CD8-positive, alpha-beta T cell (primary cell): ENCODE measurements at regions of chr15 and their contacts with region 1.

Region 1: DNA sequence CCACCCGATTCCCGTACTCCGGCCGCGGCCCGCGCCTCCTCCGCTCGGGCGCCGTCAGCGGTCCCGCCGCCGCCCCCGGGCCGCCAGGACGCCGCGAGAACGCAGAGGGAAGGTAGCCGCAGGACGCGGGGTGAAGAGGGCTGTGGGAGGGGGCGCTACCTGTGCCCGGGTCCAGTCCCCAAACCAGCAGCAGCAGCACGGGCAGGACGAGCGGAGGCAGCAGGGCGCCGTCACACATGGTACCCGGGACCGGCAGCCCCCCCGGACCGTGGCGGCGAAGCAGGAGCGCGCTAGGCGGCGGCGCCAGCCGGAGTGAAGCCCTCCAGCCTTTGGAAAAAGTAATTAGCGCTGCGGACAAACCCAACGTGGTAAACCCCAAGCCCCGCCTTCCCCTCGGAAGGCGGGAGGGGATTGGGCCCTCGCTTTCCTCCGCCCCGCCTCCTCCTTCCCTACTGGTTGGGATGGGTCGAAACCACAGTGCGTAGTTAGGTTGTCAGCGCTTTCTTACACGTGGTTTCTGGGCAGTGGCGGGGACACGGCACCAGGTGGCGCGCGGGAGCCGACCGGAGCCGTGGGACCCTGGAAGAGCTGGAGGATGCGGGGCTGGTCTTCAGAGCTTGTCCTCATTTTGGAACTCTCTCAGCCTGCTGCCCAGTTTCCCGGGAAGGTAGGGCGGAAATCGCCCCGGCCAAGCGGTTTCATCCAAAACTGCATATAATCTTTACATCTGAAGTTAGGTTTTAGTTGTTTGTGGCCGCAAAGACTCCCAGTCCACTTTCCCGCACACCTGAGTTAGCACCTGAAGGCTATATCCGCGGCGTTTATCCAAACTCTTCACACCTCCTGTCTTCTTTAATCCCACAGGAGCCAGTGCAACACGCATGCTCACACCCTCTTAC is at the start of gene ADAMTS17:
- DNase-seq: peak; percentile 90 to 98 (median 95)
- ATAC-seq: peak; percentile 94
- H3K4me3 ChIP-seq: peak within 1 kb of the TSS; percentile 54 to 80
- H3K4me3 Mint-ChIP-seq: peak within 1 kb of the TSS; percentile 80
- H3K27ac ChIP-seq: peak within 1 kb of the TSS in 1 of 2 experiments; percentile 47
- H3K27ac Mint-ChIP-seq: peak within 1 kb of the TSS; percentile 22
- H3K4me1 ChIP-seq: peaks cover 12% of the 10 kb centered on the region
- H3K4me1 Mint-ChIP-seq: peaks cover 23% of the 10 kb centered on the region
- H3K27me3 ChIP-seq: no peaks in the 10 kb centered on the region
- H3K27me3 Mint-ChIP-seq: no peaks in the 10 kb centered on the region
- CTCF ChIP-seq: peak; percentile 94
- total RNA-seq, gene ADAMTS17: 15.3 to 18.0 TPM

Region 2: DNA sequence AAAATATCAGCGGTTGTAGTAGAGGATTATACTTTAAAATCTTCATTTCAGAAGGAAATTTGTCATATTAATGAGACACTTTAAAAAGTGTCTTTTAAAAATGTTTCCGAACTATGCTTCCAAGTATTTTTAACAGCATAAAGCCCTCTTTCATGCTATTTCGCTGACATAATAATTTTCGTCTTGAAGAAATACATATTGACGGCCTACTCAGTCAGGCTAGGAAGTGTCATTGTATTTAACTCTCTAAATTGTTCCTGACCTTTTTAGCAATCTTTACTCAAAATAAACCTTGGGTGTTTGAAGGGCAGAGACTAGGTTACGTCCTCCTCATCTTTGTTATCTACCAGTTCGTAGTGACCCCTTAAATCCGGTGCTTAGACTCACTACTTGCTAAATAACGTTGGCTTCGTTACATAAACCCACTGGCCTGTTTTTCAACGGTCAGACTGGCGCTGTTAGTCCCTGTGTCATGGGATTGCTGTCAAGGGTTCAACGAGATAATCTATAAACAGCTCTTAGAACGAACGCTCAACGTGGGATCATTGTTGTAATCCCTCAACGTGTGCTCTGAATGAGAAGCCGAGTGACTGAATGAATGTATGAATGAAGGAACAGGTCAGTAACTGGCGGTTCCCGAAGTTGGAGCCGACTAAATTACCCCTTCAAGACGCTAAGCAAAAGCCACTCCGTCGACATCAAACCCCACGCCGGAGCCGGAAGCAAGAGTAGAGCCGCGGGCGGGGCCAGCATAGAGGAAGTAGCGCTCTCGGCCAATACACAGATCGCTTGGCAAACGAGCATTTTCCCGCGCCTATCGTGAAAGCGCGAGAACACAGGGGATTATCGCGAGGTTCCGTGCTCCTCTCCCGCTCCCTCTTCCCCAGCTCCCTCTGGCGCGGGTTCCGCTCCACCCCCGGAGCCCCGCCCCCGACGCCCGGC is 1091.1 kb before region 1 on chr15:
- CTCF ChIA-PET with region 1: no interaction called
- POLR2A ChIA-PET with region 1: no interaction called
- intact Hi-C with region 1: loop called in 1 of 2 experiments (anchors 2 kb)
- DNase-seq: peak; percentile 83 to 98 (median 92)
- ATAC-seq: peak; percentile 95
- H3K4me3 ChIP-seq: peak overlapping the region; percentile 55 to 59
- H3K4me3 Mint-ChIP-seq: peak overlapping the region; percentile 90
- H3K27ac ChIP-seq: peak overlapping the region; percentile 25 to 79
- H3K27ac Mint-ChIP-seq: peak overlapping the region; percentile 89
- H3K4me1 ChIP-seq: peaks cover 19% of the 10 kb centered on the region
- H3K4me1 Mint-ChIP-seq: peaks cover 29% of the 10 kb centered on the region
- H3K27me3 ChIP-seq: no peaks in the 10 kb centered on the region
- H3K27me3 Mint-ChIP-seq: no peaks in the 10 kb centered on the region
- CTCF ChIP-seq: no peak

Region 3: GRCh38 chr15:99733268-99734039 is 608.5 kb before region 1 on chr15 and contains the start of gene LYSMD4:
- CTCF ChIA-PET with region 1: no interaction called
- POLR2A ChIA-PET with region 1: no interaction called
- intact Hi-C with region 1: loop called (anchors 1 to 5 kb)
- DNase-seq: peak; percentile 97 to 99 (median 98)
- ATAC-seq: peak; percentile 99
- H3K4me3 ChIP-seq: peak within 1 kb of the TSS; percentile 69 to 80
- H3K4me3 Mint-ChIP-seq: peak within 1 kb of the TSS; percentile 89
- H3K27ac ChIP-seq: peak within 1 kb of the TSS; percentile 62 to 87
- H3K27ac Mint-ChIP-seq: peak within 1 kb of the TSS; percentile 95
- H3K4me1 ChIP-seq: peaks cover 13% of the 10 kb centered on the region
- H3K4me1 Mint-ChIP-seq: peaks cover 19% of the 10 kb centered on the region
- H3K27me3 ChIP-seq: no peaks in the 10 kb centered on the region
- H3K27me3 Mint-ChIP-seq: no peaks in the 10 kb centered on the region
- CTCF ChIP-seq: no peak
- total RNA-seq, gene LYSMD4: 7.6 to 7.7 TPM

Region 4: GRCh38 chr15:100131321-100132224 is 210.3 kb before region 1 on chr15:
- CTCF ChIA-PET with region 1: interaction called, 10 read pairs
- POLR2A ChIA-PET with region 1: no interaction called
- intact Hi-C with region 1: no loop called
- DNase-seq: peak in 3 of 9 experiments; percentile 15 to 27 (median 18)
- ATAC-seq: peak; percentile 38
- H3K4me3 ChIP-seq: no peak overlapping the region
- H3K4me3 Mint-ChIP-seq: peak overlapping the region; percentile 58
- H3K27ac ChIP-seq: no peak overlapping the region
- H3K27ac Mint-ChIP-seq: no peak overlapping the region
- H3K4me1 ChIP-seq: no peaks in the 10 kb centered on the region
- H3K4me1 Mint-ChIP-seq: no peaks in the 10 kb centered on the region
- H3K27me3 ChIP-seq: no peaks in the 10 kb centered on the region
- H3K27me3 Mint-ChIP-seq: no peaks in the 10 kb centered on the region
- CTCF ChIP-seq: no peak

Region 5: DNA sequence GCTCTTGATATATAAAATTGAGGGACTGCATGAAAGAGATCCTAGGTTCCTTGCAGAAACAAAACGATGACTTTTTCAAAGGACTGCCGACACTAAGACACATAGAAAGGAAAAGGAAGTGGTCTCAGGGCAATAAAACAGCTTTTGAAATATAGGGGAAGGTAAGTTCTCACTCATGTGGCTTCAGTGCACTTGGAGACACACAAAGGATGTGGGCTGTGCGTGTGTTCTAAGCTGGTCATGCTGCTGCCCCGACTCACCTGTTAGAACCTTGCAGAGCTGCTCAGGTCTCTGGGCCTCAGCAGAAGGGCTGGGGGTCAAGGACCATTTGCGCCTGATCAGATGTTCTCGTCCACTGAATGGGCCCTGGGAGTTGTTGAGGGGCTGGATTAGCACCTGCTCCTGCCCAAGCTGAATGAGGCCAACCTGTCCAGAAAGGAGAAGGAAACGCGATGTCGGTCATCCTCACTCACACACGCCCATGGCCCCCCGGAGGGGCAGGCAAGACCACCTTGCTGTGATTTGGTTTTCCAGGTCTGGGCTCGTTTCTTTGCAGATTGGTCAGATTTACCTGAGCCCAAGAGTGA is 11.2 kb before region 1 on chr15:
- CTCF ChIA-PET with region 1: interaction called, 139 read pairs
- POLR2A ChIA-PET with region 1: interaction called, 24 read pairs
- intact Hi-C with region 1: loop called in 1 of 2 experiments (anchors 1 kb)
- DNase-seq: peak in 7 of 9 experiments; percentile 36 to 82 (median 61)
- ATAC-seq: peak; percentile 88
- H3K4me3 ChIP-seq: peak overlapping the region; percentile 30 to 41
- H3K4me3 Mint-ChIP-seq: peak overlapping the region; percentile 61
- H3K27ac ChIP-seq: peak overlapping the region in 1 of 2 experiments; percentile 52
- H3K27ac Mint-ChIP-seq: peak overlapping the region; percentile 76
- H3K4me1 ChIP-seq: peaks cover 71% of the 10 kb centered on the region
- H3K4me1 Mint-ChIP-seq: peaks cover 81% of the 10 kb centered on the region
- H3K27me3 ChIP-seq: no peaks in the 10 kb centered on the region
- H3K27me3 Mint-ChIP-seq: peaks cover 2% of the 10 kb centered on the region
- CTCF ChIP-seq: no peak

Region 6: GRCh38 chr15:100572362-100572983 is 230.6 kb after region 1 on chr15:
- CTCF ChIA-PET with region 1: interaction called, 114 read pairs
- POLR2A ChIA-PET with region 1: no interaction called
- intact Hi-C with region 1: loop called in 1 of 2 experiments (anchors 2 kb)
- DNase-seq: peak in 2 of 9 experiments; percentile 26 to 51
- ATAC-seq: peak; percentile 58
- H3K4me3 ChIP-seq: no peak overlapping the region
- H3K4me3 Mint-ChIP-seq: peak overlapping the region; percentile 64
- H3K27ac ChIP-seq: peak overlapping the region in 1 of 2 experiments; percentile 6
- H3K27ac Mint-ChIP-seq: peak overlapping the region; percentile 93
- H3K4me1 ChIP-seq: peaks cover 26% of the 10 kb centered on the region
- H3K4me1 Mint-ChIP-seq: peaks cover 56% of the 10 kb centered on the region
- H3K27me3 ChIP-seq: no peaks in the 10 kb centered on the region
- H3K27me3 Mint-ChIP-seq: no peaks in the 10 kb centered on the region
- CTCF ChIP-seq: peak; percentile 80

Region 7: DNA sequence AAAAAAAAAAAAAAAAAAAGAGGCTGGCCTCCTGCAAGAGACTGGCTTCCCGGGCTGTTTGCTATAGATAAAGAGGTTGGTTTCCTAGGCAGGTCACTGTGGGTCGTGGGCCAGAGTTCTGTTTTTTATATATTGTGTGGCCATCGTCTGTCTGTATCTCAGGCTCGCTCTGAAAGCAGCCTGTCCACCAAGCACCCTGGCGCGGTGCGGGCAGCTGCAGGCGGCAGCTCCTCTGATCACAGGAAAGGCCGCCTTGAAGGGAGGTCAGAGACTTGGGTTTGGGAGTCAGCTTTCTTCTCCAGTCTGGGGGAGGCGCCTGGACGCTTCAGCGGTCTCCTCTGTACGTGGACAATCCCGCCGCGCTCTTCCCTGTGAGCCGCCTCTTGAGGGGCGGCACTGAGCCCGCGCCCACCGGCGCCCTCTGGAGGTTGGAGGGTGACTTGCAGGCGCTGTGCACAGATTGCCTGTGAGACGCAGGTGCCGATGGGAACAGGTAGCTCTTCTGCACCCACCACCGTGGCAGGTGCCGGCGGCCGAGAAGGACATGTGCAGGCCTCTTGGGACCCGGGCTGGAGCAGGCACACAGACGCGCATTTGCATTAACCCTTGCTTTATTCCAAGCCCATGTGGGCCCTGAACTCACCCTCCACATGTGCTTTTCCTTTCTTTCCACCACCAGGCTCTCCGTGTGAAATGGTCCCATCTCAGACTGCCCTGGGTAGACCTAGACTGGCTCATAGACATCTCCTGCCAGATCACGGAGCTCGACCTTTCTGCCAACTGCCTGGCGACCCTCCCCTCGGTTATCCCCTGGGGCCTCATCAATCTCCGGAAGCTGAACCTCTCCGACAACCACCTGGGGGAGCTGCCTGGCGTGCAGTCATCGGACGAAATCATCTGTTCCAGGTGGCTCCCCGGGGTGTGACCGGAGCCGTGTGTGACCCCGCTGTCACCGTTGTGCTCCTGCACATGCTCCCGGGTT is 666.5 kb after region 1 on chr15:
- CTCF ChIA-PET with region 1: interaction called, 4 read pairs
- POLR2A ChIA-PET with region 1: no interaction called
- intact Hi-C with region 1: loop called (anchors 2 to 5 kb)
- DNase-seq: peak; percentile 74 to 92 (median 86)
- ATAC-seq: peak; percentile 98
- H3K4me3 ChIP-seq: peak overlapping the region; percentile 73 to 81
- H3K4me3 Mint-ChIP-seq: peak overlapping the region; percentile 88
- H3K27ac ChIP-seq: no peak overlapping the region
- H3K27ac Mint-ChIP-seq: peak overlapping the region; percentile 60
- H3K4me1 ChIP-seq: peaks cover 13% of the 10 kb centered on the region
- H3K4me1 Mint-ChIP-seq: peaks cover 19% of the 10 kb centered on the region
- H3K27me3 ChIP-seq: peaks cover 0 to 3% of the 10 kb centered on the region in 2 experiments
- H3K27me3 Mint-ChIP-seq: no peaks in the 10 kb centered on the region
- CTCF ChIP-seq: peak; percentile 96